Activated naive CD4-positive, alpha-beta T cell treated with anti-CD3 and anti-CD28 coated beads, Interleukin-2, amount 10 ng/mL, durations not matched to agents 7 days and 5 days (primary cell): ENCODE measurements at regions of chr16 and their contacts with region 1.

Region 1: DNA sequence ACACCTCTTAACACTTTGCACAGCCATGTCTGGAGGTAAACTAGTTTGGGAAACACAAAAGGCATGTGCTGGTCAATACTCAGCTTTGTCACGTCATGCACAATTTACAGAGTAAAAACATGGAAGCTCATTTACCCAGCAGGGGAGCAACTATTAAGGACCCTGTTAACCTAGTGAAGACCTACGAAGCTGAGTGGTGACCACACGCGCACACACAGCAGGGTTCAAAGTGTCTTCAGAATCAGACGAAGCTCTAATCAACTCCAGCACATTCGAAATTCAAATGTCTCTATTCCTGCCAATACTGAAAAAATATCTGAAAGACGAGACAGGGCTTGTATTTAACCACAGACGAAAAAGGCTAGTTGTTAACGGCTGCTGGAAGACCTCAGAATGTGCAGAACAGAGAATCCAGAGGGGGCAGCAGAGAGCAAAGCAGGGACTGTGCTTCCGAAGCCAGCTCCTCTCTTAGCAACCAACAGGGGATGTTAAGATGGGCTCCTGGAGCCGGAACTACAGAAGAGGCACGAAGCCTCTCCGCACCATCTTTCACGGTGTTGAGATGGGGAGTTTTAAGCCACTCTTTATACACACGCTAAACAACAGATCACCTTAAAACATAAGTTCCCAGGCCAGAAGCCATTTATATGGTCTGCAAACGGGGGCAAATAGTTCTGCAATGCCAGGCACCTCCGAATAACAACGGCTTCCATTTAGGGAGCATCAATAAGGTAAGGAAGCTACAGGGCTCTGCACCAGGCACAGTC is 45.7 kb downstream of the CMTM4 start:
- DNase-seq: peak; percentile 89
- H3K4me3 Mint-ChIP-seq: peak overlapping the region; percentile 17
- H3K27ac Mint-ChIP-seq: no peak overlapping the region
- H3K4me1 Mint-ChIP-seq: peaks cover 18% of the 10 kb centered on the region
- H3K27me3 Mint-ChIP-seq: peaks cover 26% of the 10 kb centered on the region

Region 2: DNA sequence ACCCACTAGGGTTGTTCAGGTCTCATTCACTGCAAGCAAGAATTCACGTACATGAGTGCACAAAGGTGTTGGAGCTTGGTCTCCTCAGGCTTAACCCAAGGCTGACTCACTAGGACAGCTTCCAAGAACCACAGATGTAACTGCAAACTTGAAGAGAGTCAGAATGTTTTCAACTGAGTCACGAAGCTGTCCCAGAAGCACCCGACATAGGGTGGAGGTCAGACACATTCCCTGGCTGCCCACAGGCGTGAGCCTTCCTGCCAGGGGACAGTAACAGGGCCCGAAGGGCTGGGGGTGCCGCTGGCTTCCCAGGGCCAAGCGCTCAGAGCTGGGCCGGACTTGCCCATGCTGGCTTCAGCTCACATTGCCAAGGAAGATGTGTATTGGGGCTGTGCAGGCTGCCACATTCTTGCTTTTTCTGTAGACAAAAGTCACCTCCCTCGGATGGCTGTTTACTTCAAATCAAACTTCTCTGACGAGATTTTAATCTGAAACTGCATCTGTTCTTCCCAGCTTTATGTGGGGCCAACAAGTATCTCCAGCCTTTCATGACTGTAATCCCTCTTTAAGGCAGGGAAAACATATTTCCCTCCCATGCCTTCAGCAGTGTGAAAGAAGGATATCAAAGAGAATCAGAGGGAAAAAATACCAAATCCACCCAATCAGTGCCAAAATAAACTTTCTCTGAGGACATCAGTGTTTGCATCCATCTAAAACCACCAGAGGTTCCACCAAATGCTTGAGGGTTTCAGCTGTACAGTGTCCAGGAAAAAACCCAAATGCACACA is 32.1 kb before region 1 on chr16:
- CTCF ChIA-PET with region 1: interaction called, 10 read pairs
- DNase-seq: no peak
- H3K4me3 Mint-ChIP-seq: no peak overlapping the region
- H3K27ac Mint-ChIP-seq: no peak overlapping the region
- H3K4me1 Mint-ChIP-seq: no peaks in the 10 kb centered on the region
- H3K27me3 Mint-ChIP-seq: no peaks in the 10 kb centered on the region

Region 3: DNA sequence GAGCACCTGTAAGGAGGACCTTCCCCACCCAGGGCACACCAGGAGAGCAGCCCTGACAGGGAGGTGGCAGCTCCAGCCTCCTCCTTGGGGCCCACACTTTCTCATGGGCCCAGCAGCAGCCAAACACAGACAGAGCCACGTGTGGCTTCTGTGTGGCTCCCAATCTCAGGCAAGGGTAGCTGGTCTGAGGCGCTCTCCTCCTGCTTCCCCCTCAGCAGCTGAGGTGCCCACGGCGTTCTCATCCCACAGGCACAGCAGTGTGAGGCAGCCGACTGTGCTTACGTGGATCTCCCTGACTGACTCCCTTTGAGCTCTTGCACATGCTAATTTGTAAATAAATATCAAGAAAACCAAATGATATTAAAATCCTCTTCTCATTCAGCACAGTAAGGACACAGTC is 15.5 kb before region 1 on chr16:
- CTCF ChIA-PET with region 1: interaction called, 11 read pairs
- DNase-seq: no peak
- H3K4me3 Mint-ChIP-seq: no peak overlapping the region
- H3K27ac Mint-ChIP-seq: no peak overlapping the region
- H3K4me1 Mint-ChIP-seq: no peaks in the 10 kb centered on the region
- H3K27me3 Mint-ChIP-seq: peaks cover 23% of the 10 kb centered on the region

Region 4: GRCh38 chr16:66740010-66740409 is 89.1 kb after region 1 on chr16:
- CTCF ChIA-PET with region 1: interaction called, 11 read pairs
- DNase-seq: peak; percentile 58
- H3K4me3 Mint-ChIP-seq: no peak overlapping the region
- H3K27ac Mint-ChIP-seq: no peak overlapping the region
- H3K4me1 Mint-ChIP-seq: peaks cover 23% of the 10 kb centered on the region
- H3K27me3 Mint-ChIP-seq: no peaks in the 10 kb centered on the region